Testis (tissue), 5 donors: ENCODE measurements at regions of chr5 and their contacts with region 1.

Region 1: GRCh38 chr5:8601831-8602354 is 732.9 kb downstream of the MTRR start:
- DNase-seq: no peak
- H3K4me3 ChIP-seq: no peak overlapping the region
- H3K27ac ChIP-seq: no peak overlapping the region
- H3K4me1 ChIP-seq: no peaks in the 10 kb centered on the region
- H3K27me3 ChIP-seq: no peaks in the 10 kb centered on the region
- CTCF ChIP-seq: no peak
- POLR2A ChIP-seq: no peak

Region 2: DNA sequence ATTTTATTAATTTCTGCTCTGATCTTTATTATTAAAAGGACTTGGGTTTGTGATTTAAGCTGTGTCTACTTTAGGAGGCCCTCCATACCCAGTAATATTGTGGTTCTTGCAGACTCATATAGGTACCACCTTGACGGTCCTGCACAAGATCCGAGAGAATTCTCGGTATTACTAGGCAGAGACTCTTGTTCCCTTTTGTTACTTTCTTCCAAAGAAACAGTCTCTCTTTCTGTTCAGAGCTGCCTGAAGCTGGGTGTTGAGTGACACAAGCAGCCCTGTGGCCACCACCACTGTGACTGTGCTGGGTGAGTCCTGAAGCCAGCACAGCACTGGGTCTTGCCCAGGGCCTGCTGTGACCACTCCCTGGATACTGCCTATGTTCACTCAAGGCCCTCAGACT is 277.4 kb after region 1 on chr5:
- intact Hi-C with region 1: loop called (anchors 5 kb)
- DNase-seq: no peak
- H3K4me3 ChIP-seq: no peak overlapping the region
- H3K27ac ChIP-seq: no peak overlapping the region
- H3K4me1 ChIP-seq: no peaks in the 10 kb centered on the region
- H3K27me3 ChIP-seq: no peaks in the 10 kb centered on the region
- CTCF ChIP-seq: no peak
- POLR2A ChIP-seq: no peak